ENCODE measurements at regions of chr3 and their contacts with region 1.

Region 1: DNA sequence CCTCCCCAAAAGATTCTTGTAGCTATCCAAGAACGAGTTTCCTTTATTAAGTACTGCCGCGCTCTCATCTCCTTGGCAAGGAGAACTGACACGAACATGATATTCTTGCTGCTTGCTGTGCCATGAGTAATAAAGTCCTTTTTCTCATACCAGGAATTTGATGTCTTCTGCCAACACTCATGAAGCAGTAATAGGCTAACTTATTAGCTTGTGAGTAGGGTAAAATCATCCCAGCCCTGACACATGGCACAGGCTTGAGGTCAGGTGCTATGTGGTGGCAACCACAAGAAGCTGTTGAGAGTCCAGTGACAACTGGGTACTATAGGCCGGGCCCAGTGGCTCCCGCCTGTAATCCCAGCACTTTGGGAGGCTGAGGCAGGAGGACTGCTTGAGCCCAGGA is 22.7 kb upstream of the UBXN7 start:
- DNase-seq: peak; percentile 43
- ATAC-seq: no peak
- H3K4me3 ChIP-seq: no peak overlapping the region
- H3K27ac ChIP-seq: no peak overlapping the region
- H3K4me1 ChIP-seq: no peaks in the 10 kb centered on the region
- H3K27me3 ChIP-seq: no peaks in the 10 kb centered on the region
- CTCF ChIP-seq: no peak
- POLR2A ChIP-seq: no peak
- RAD21 ChIP-seq: no peak

Region 2: DNA sequence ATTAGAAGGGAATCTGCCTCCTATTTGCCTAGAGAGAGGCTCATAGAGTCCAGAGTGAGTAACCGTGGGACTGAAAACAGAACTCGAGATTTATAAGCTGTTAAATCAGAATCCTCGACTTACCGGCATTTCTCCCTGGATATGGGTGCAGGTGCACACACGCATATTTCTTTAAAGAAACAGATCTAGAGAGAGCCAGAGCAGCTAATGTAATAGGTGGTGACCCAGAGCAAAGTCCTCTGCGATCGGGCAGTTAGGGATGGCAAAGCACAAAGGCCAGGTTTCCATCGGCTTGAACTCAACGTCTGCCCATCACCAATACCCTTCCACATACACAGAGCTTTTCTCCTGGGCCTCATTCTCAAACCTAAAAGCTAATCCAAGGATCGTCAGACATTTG is 34.8 kb after region 1 on chr3:
- CTCF ChIA-PET with region 1: no interaction called
- POLR2A ChIA-PET with region 1: no interaction called
- dilution Hi-C with region 1: no loop called
- in situ Hi-C with region 1: no loop called
- intact Hi-C with region 1: loop called (anchors 5 kb)
- DNase-seq: no peak
- ATAC-seq: no peak
- H3K4me3 ChIP-seq: no peak overlapping the region
- H3K27ac ChIP-seq: no peak overlapping the region
- H3K4me1 ChIP-seq: no peaks in the 10 kb centered on the region
- H3K27me3 ChIP-seq: no peaks in the 10 kb centered on the region
- CTCF ChIP-seq: no peak
- POLR2A ChIP-seq: no peak
- RAD21 ChIP-seq: no peak

Measured in IMR-90 (cell line).